Transverse colon (tissue), 4 donors: ENCODE measurements at regions of chr3 and their contacts with region 1.

Region 1: DNA sequence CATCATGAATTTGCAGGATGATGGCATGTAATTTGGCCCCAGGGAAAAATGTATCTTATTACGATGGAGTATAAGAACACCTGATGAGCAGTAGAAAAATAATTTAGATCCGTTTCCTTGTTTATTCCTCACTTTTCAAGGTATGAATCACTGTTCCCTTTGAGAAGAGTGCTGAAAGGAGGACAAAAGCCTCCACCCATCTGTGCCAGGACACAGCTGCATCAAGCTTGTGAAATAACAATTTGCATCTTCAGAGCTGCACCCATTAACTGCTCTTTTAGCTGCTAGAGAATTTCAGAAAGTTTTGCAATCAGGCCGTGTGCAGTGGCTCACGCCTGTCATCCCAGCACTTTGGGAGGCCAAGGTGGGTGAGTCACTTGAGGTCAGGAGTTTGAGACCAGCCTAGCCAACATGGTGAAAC is 9.6 kb downstream of the CLDND1 start:
- DNase-seq: no peak
- H3K4me3 ChIP-seq: no peak overlapping the region
- H3K27ac ChIP-seq: no peak overlapping the region
- H3K4me1 ChIP-seq: no peaks in the 10 kb centered on the region
- H3K27me3 ChIP-seq: no peaks in the 10 kb centered on the region
- CTCF ChIP-seq: no peak
- EP300 ChIP-seq: no peak
- POLR2A ChIP-seq: no peak

Region 2: DNA sequence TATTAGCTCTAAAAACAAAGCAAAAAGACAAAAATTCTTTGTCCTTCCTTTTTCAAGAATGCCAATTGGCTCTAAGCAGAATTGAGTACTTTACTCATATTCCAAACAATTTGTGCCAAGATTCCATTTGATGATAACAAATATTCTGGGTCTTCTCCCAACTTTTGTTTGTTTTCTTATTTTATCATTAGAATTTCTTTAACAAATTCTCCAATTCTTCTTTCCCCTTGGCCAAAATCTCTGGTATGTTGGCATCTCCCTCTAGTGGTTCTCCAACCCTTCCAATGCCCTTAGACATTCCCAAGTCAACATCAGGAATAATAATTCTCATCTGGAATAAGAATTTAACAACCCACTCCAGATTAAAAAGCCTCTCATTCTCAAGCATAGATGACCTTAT is 75.0 kb after region 1 on chr3:
- in situ Hi-C with region 1: loop called in 1 of 4 experiments (anchors 10 kb)
- intact Hi-C with region 1: no loop called
- DNase-seq: no peak
- H3K4me3 ChIP-seq: no peak overlapping the region
- H3K27ac ChIP-seq: no peak overlapping the region
- H3K4me1 ChIP-seq: peaks cover 8 to 25% (median 15%) of the 10 kb centered on the region in 4 donors
- H3K27me3 ChIP-seq: no peaks in the 10 kb centered on the region
- CTCF ChIP-seq: peak in 1 of 5 experiments; percentile 5
- EP300 ChIP-seq: no peak
- POLR2A ChIP-seq: no peak